ENCODE measurements at regions of chr2 and their contacts with region 1.

Region 1: DNA sequence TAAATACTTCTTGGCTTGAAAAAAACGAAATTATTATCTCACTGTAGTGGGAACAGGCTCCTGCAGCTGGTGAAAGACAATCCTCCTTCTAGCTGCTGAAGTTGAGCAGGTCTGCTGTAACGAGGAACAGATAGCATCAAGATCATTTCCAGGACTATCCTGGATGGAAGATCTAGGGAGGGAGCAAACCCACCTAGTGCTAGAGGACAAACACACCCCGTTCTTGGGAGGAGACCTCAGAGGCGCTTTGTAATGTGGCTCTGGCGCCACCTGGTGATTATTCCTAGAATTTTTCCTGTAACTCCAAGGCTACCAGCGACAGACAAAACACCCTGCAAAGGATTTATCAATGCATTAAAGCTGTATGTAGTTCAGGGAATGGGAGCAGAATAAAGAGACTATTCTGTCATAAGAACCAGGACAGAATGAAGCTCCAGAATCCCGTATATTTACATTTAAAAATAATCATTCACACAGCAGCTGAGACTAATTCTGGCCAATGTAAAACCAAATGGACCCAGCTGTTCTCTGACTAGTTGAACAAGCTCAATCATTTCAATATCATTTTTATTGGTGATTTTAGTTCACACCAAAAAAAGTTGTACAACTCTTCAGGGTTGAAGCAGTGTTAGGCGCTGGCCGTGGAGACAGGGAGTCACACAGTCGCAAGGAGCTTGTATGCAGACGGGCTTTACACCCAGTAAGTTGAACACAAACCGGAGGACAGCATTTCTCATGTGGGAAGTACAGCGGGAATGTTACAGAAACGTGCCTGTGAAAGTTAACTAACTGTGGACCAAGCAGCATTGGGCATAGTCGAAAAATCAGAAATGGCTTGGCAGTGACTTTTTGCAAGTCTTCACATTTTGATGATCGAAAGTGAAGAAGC is 290.3 kb downstream of the TRIB2 start:
- DNase-seq: peak; percentile 70
- ATAC-seq: peak; percentile 98
- H3K4me3 Mint-ChIP-seq: no peak overlapping the region
- H3K27ac Mint-ChIP-seq: no peak overlapping the region
- H3K4me1 Mint-ChIP-seq: peaks cover 19% of the 10 kb centered on the region
- H3K27me3 Mint-ChIP-seq: no peaks in the 10 kb centered on the region
- CTCF ChIP-seq: peak; percentile 85

Region 2: GRCh38 chr2:12547566-12548170 is 459.4 kb before region 1 on chr2:
- CTCF ChIA-PET with region 1: interaction called, 10 read pairs
- POLR2A ChIA-PET with region 1: no interaction called
- DNase-seq: peak; percentile 54
- ATAC-seq: peak; percentile 70
- H3K4me3 Mint-ChIP-seq: no peak overlapping the region
- H3K27ac Mint-ChIP-seq: no peak overlapping the region
- H3K4me1 Mint-ChIP-seq: peaks cover 10% of the 10 kb centered on the region; the same call in 1 of the 2 replicates
- H3K27me3 Mint-ChIP-seq: no peaks in the 10 kb centered on the region
- CTCF ChIP-seq: no peak

Region 3: GRCh38 chr2:12931186-12931844 is 75.8 kb before region 1 on chr2:
- CTCF ChIA-PET with region 1: interaction called, 15 read pairs
- POLR2A ChIA-PET with region 1: no interaction called
- DNase-seq: no peak
- ATAC-seq: peak; percentile 92
- H3K4me3 Mint-ChIP-seq: no peak overlapping the region
- H3K27ac Mint-ChIP-seq: no peak overlapping the region
- H3K4me1 Mint-ChIP-seq: peaks cover 28% of the 10 kb centered on the region
- H3K27me3 Mint-ChIP-seq: peaks cover 3% of the 10 kb centered on the region
- CTCF ChIP-seq: peak; percentile 37; the same call in 1 of the 2 replicates

Region 4: GRCh38 chr2:13106302-13106701 is 99.2 kb after region 1 on chr2:
- CTCF ChIA-PET with region 1: no interaction called
- POLR2A ChIA-PET with region 1: no interaction called
- DNase-seq: no peak
- ATAC-seq: no peak
- H3K4me3 Mint-ChIP-seq: no peak overlapping the region
- H3K27ac Mint-ChIP-seq: no peak overlapping the region
- H3K4me1 Mint-ChIP-seq: no peaks in the 10 kb centered on the region
- H3K27me3 Mint-ChIP-seq: no peaks in the 10 kb centered on the region
- CTCF ChIP-seq: no peak

Region 5: DNA sequence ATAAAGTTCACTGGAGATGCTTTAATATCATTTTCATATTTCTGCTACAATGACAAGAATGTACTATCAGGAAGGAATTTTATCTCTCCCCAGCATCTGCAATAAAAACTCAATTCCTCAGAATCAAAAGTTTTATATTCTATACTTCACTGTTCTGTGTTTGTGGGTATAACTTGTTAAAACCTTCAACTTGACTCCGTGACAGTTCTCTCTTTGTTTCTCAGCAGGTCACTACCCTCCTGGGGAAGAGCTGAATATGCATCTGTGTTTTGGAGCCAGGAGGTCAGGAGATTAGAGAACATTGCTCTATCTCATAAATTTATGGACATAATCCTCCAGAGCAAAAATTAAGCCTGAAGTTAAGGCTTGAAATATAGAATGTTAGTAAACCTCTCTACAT is 121.1 kb after region 1 on chr2:
- CTCF ChIA-PET with region 1: no interaction called
- POLR2A ChIA-PET with region 1: no interaction called
- DNase-seq: no peak
- ATAC-seq: no peak
- H3K4me3 Mint-ChIP-seq: no peak overlapping the region
- H3K27ac Mint-ChIP-seq: no peak overlapping the region
- H3K4me1 Mint-ChIP-seq: peaks cover 4% of the 10 kb centered on the region
- H3K27me3 Mint-ChIP-seq: no peaks in the 10 kb centered on the region; the same call in 1 of the 2 replicates
- CTCF ChIP-seq: no peak